Heart left ventricle (tissue), 16 donors: ENCODE measurements at regions of chr14 and their contacts with region 1.

Region 1: GRCh38 chr14:61694830-61695694 is at the start of gene HIF1A:
- DNase-seq: peak; percentile 97 to 99 (median 98)
- ATAC-seq: peak; percentile 97 to 99 (median 98)
- H3K4me3 ChIP-seq: peak within 1 kb of the TSS; percentile 65 to 95 (median 89)
- H3K27ac ChIP-seq: peak within 1 kb of the TSS; percentile 93 to 99 (median 97)
- H3K4me1 ChIP-seq: peaks cover 0 to 39% (median 23%) of the 10 kb centered on the region in 12 donors
- H3K27me3 ChIP-seq: no peaks in the 10 kb centered on the region
- CTCF ChIP-seq: peak in 2 of 12 donors; percentile 23 to 24
- POLR2A ChIP-seq: peak; percentile 92 to 95
- total RNA-seq, gene HIF1A: 52.4 to 157 (median 72.8) TPM

Region 2: GRCh38 chr14:61461808-61462275 is 233.2 kb before region 1 on chr14:
- intact Hi-C with region 1: loop called in 1 of 10 experiments (anchors 5 kb)
- DNase-seq: no peak
- ATAC-seq: peak; percentile 27 to 49 (median 38)
- H3K4me3 ChIP-seq: no peak overlapping the region
- H3K27ac ChIP-seq: peak overlapping the region in 4 of 12 donors; percentile 32 to 65 (median 40)
- H3K4me1 ChIP-seq: peaks cover 0 to 36% (median 27%) of the 10 kb centered on the region in 12 donors
- H3K27me3 ChIP-seq: no peaks in the 10 kb centered on the region
- CTCF ChIP-seq: peak; percentile 65 to 90 (median 81)
- POLR2A ChIP-seq: no peak

Region 3: DNA sequence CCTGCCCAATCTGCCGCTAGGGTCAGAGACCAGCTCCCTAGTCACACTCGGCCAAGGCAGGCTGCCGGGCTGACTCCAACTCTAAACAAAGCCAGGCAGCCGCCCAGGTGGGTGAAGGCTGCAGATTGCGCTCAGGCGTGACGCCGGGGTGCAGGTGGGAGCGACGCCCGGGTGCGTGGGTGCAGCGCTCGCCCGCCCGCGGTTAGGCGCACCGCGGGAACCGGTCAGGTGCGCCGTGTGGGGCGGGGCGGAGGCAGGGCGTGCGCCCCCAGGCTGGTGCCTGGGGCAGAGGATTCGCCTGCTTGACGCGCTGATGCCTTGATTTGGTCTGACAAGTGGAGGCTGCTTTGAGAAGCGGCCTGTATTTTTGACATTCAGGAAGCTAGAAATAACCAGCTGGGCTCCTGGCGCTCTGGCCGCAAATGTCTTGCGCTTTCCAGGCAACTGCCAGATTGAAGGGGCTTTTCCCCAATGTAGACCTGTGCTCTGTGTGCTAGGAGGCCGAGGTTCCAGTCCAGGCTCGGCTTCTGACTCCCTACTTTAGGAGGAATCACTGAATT is 126.4 kb before region 1 on chr14:
- intact Hi-C with region 1: loop called in 5 of 10 experiments (anchors 5 to 10 kb)
- DNase-seq: peak in 3 of 5 donors; percentile 48 to 75 (median 58)
- ATAC-seq: peak; percentile 30 to 76 (median 55)
- H3K4me3 ChIP-seq: peak overlapping the region in 10 of 12 donors; percentile 11 to 45 (median 33)
- H3K27ac ChIP-seq: peak overlapping the region; percentile 56 to 87 (median 74)
- H3K4me1 ChIP-seq: peaks cover 6 to 91% (median 36%) of the 10 kb centered on the region in 12 donors
- H3K27me3 ChIP-seq: no peaks in the 10 kb centered on the region
- CTCF ChIP-seq: peak in 6 of 12 donors; percentile 4 to 25 (median 9)
- POLR2A ChIP-seq: no peak

Region 4: DNA sequence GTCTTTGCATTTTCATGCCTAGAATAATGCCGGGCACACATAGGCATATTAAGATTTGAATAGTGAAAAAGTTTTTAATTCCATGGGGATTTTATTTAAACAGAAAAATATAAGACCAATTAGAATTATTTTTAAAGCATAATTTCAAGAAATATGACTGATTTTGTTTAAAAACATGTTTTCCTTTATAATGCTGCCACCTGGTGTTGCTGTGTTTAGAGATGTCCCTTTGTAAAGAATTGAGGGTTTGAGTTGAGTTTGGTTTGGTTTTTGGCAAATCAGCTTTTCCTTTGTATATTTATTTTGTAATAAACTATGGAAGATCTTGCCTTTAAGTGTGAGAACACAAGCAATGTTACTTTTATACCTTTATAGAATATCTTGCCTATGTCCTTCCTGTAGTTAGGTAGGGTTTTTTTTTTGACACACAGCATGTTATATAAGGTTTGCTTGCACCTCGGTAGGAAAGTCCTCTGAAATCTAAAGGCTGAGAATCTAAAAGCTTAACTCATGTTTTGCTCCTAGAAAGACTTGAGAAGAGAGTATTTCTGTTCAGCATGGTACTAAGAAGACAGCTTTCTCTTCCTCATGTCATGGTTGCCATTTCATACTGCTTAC is 35.8 kb after region 1 on chr14:
- intact Hi-C with region 1: loop called in 1 of 10 experiments (anchors 5 kb)
- DNase-seq: no peak
- ATAC-seq: no peak
- H3K4me3 ChIP-seq: no peak overlapping the region
- H3K27ac ChIP-seq: peak overlapping the region in 3 of 12 donors; percentile 18 to 44 (median 25)
- H3K4me1 ChIP-seq: peaks cover 0 to 26% (median 8%) of the 10 kb centered on the region in 12 donors
- H3K27me3 ChIP-seq: no peaks in the 10 kb centered on the region
- CTCF ChIP-seq: peak in 11 of 12 donors; percentile 26 to 71 (median 55)
- POLR2A ChIP-seq: no peak

Region 5: GRCh38 chr14:61761959-61762786 is 67.1 kb after region 1 on chr14 and contains the start of gene SNAPC1:
- intact Hi-C with region 1: loop called in 1 of 10 experiments (anchors 5 kb)
- DNase-seq: peak; percentile 97 to 99 (median 98)
- ATAC-seq: peak; percentile 99 to 100 (median 99)
- H3K4me3 ChIP-seq: peak within 1 kb of the TSS; percentile 29 to 90 (median 80)
- H3K27ac ChIP-seq: peak within 1 kb of the TSS; percentile 78 to 97 (median 93)
- H3K4me1 ChIP-seq: peaks cover 0 to 39% (median 18%) of the 10 kb centered on the region in 12 donors
- H3K27me3 ChIP-seq: no peaks in the 10 kb centered on the region
- CTCF ChIP-seq: no peak
- POLR2A ChIP-seq: peak; percentile 77 to 92
- total RNA-seq, gene SNAPC1: 5.9 to 9.0 (median 7.2) TPM